Activated CD8-positive, alpha-beta T cell treated with anti-CD3 and anti-CD28 coated beads, Interleukin-2, amount 10 ng/mL, durations not matched to agents 7 days and 5 days (primary cell): ENCODE measurements at regions of chr6 and their contacts with region 1.

Region 1: DNA sequence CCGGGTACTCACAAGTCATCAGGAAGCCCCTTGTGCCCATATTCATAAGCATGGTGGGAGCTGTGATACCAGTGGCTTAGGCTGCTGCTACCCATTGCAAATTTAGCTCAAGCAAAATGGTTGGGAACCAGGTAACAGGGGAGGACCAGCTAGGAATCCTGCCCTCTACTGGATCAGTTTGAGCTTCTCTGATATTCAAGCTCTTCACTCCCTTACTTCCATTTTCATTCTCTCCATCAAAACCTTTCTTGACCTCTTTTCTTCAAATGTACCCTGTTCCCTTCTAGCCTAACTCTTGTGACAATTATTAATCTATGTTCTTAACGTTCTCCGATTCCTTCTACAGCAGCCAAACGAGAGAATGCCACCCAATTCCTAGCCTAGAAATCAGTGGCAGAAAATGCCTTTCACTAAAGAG is 9.7 kb downstream of the NOL7 start:
- DNase-seq: peak; percentile 48
- ATAC-seq: peak; percentile 77
- H3K4me3 Mint-ChIP-seq: no peak overlapping the region
- H3K27ac Mint-ChIP-seq: peak overlapping the region; percentile 62
- H3K4me1 Mint-ChIP-seq: peaks cover 2% of the 10 kb centered on the region
- H3K27me3 Mint-ChIP-seq: no peaks in the 10 kb centered on the region

Region 2: DNA sequence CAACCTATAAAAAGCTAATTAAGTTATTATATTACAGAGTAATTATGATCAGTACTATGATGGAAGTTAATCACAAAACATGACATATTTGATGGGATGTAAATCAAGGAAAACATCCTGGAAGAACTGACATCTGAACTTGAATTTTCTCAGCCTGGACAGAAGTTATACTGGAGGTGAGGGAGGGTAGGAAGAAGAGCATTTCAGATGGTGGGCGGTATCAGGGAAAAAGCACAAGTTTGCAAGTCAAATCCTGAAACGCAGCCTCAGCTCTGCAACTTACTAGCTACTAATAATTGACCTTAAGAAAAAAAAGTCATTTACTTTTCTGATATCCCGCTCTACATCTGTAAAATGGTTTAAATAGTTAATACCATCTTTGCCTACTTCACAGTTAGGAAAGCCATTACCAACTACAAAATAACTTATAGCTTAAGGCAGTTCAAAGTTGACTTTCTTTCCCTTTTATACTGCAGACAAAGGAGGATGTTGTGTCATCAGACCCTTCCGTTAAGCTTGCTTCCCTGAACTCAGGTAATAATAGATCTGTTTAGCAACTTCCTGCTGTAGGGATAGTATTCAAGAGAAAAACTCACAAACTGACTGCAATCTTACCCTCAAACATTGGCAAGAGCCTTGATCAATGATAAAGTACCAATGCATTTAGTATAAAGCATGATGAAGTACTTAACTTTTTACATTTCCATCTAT is 11.2 kb after region 1 on chr6:
- CTCF ChIA-PET with region 1: interaction called, 11 read pairs
- POLR2A ChIA-PET with region 1: interaction called, 5 read pairs
- DNase-seq: no peak
- ATAC-seq: peak; percentile 55
- H3K4me3 Mint-ChIP-seq: no peak overlapping the region
- H3K27ac Mint-ChIP-seq: peak overlapping the region; percentile 81
- H3K4me1 Mint-ChIP-seq: peaks cover 27% of the 10 kb centered on the region
- H3K27me3 Mint-ChIP-seq: no peaks in the 10 kb centered on the region